Heart right ventricle (tissue), 16 donors: ENCODE measurements at regions of chr2 and their contacts with region 1.

Region 1: GRCh38 chr2:115400940-115401339 is 958.5 kb downstream of the DPP10 start:
- DNase-seq: no peak
- ATAC-seq: no peak
- H3K4me3 ChIP-seq: no peak overlapping the region
- H3K27ac ChIP-seq: no peak overlapping the region
- H3K4me1 ChIP-seq: no peaks in the 10 kb centered on the region
- H3K27me3 ChIP-seq: no peaks in the 10 kb centered on the region
- CTCF ChIP-seq: no peak

Region 2: DNA sequence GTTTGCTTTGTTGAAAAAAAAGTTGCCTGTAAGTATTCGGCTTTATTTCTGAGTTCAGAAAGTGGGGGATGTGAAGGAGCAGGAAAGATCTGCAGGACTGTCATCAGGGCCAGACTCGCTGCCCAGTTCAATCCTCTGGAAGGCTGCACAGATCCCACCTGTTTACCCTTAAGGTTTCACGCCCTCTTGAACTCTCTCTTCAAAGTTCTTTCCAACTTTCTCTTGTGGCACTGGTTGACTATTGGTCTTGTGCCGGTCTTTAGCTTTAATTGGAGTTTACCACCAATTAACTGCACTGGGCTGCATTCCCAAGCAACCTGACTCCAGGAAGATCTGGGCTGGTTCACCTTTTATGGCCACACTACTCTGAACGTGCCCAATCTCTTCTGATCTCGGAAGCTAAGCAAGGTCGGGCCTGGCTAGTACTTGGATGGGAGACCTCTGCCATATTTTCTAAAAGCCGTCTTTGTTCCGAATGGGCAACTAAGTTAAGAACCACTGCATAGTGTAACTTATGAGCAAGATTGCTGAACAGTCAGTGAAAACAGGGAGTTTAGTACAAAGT is 463.5 kb before region 1 on chr2:
- intact Hi-C with region 1: loop called in 1 of 10 experiments (anchors 10 kb)
- DNase-seq: no peak
- ATAC-seq: no peak
- H3K4me3 ChIP-seq: no peak overlapping the region
- H3K27ac ChIP-seq: no peak overlapping the region
- H3K4me1 ChIP-seq: no peaks in the 10 kb centered on the region
- H3K27me3 ChIP-seq: no peaks in the 10 kb centered on the region
- CTCF ChIP-seq: no peak

Region 3: DNA sequence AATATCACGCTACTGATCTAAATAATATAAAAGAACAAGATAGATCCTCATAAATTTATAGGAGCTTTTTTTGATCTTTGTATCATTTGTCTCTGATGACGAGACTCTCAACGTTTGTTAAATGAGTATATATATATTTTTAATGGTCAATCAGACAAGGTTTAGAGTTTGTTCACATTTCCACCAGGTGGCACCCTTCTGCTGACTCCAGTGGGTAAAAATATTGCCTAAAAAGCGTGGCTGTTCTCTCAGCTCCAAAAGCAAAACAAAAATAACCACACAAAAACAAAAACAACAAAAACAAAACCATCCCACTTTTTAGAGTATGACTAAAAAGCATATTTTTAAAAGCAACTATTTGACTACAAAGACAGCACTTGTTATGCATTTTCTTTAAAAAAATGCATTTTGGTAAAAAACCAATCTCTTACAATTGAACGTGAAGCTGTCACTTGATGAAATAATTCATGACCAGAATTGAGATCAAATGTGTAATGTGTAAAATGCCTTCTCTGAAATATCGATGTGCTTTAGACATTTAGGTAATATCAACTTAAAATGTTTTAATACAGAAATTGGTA is 235.3 kb before region 1 on chr2:
- intact Hi-C with region 1: no loop called
- DNase-seq: no peak
- ATAC-seq: no peak
- H3K4me3 ChIP-seq: no peak overlapping the region
- H3K27ac ChIP-seq: no peak overlapping the region
- H3K4me1 ChIP-seq: peaks cover 0 to 4% (median 0%) of the 10 kb centered on the region in 9 donors
- H3K27me3 ChIP-seq: peaks cover 11 to 51% (median 41%) of the 10 kb centered on the region in 7 donors
- CTCF ChIP-seq: peak in 7 of 9 donors; percentile 26 to 48 (median 33)

Region 4: DNA sequence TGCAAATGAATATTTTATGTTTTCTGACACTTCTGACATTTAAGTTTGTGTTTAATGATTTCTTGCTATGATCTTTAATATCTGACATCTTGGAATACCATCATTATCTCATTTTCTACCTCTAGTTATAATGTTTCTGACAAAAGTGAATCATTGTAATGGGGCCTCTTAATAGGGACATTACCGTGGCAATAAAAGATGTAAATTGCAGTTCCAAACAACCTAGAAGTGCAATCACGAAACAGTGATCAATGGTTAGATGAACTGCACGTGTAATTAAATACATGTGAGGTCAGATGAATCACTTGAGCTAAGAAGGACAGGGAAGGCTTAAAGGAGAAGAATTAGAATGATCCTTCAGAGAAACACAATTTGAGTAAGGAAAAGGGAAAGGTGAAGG is 119.8 kb after region 1 on chr2:
- intact Hi-C with region 1: no loop called
- DNase-seq: no peak
- ATAC-seq: no peak
- H3K4me3 ChIP-seq: no peak overlapping the region
- H3K27ac ChIP-seq: no peak overlapping the region
- H3K4me1 ChIP-seq: no peaks in the 10 kb centered on the region
- H3K27me3 ChIP-seq: no peaks in the 10 kb centered on the region
- CTCF ChIP-seq: no peak